Activated B cell treated with CpG ODN at 0.5 μM for 24 hours (primary cell): ENCODE measurements at regions of chr13 and their contacts with region 1.

Region 1: GRCh38 chr13:71879129-71879535 is 12.1 kb upstream of the DACH1 start:
- DNase-seq: no peak
- ATAC-seq: no peak
- H3K4me3 Mint-ChIP-seq: no peak overlapping the region
- H3K27ac Mint-ChIP-seq: no peak overlapping the region
- H3K4me1 Mint-ChIP-seq: no peaks in the 10 kb centered on the region
- H3K27me3 Mint-ChIP-seq: no peaks in the 10 kb centered on the region
- CTCF ChIP-seq: no peak

Region 2: GRCh38 chr13:70623239-70623638 is 1255.9 kb before region 1 on chr13:
- CTCF ChIA-PET with region 1: no interaction called
- POLR2A ChIA-PET with region 1: no interaction called
- intact Hi-C with region 1: loop called (anchors 5 kb)
- DNase-seq: no peak
- ATAC-seq: no peak
- H3K4me3 Mint-ChIP-seq: no peak overlapping the region
- H3K27ac Mint-ChIP-seq: no peak overlapping the region
- H3K4me1 Mint-ChIP-seq: no peaks in the 10 kb centered on the region
- H3K27me3 Mint-ChIP-seq: no peaks in the 10 kb centered on the region
- CTCF ChIP-seq: no peak

Region 3: GRCh38 chr13:71285700-71286099 is 593.4 kb before region 1 on chr13:
- CTCF ChIA-PET with region 1: no interaction called
- POLR2A ChIA-PET with region 1: no interaction called
- intact Hi-C with region 1: loop called (anchors 5 kb)
- DNase-seq: no peak
- ATAC-seq: no peak
- H3K4me3 Mint-ChIP-seq: no peak overlapping the region
- H3K27ac Mint-ChIP-seq: no peak overlapping the region
- H3K4me1 Mint-ChIP-seq: peaks cover 2% of the 10 kb centered on the region
- H3K27me3 Mint-ChIP-seq: no peaks in the 10 kb centered on the region
- CTCF ChIP-seq: no peak